ENCODE measurements at regions of chr4 and their contacts with region 1.

Region 1: GRCh38 chr4:128863312-128864075 is 54.0 kb downstream of the JADE1 start:
- DNase-seq: peak; percentile 86
- H3K4me3 ChIP-seq: no peak overlapping the region
- H3K27ac ChIP-seq: no peak overlapping the region
- H3K4me1 ChIP-seq: no peaks in the 10 kb centered on the region
- H3K27me3 ChIP-seq: no peaks in the 10 kb centered on the region
- CTCF ChIP-seq: peak; percentile 83

Region 2: DNA sequence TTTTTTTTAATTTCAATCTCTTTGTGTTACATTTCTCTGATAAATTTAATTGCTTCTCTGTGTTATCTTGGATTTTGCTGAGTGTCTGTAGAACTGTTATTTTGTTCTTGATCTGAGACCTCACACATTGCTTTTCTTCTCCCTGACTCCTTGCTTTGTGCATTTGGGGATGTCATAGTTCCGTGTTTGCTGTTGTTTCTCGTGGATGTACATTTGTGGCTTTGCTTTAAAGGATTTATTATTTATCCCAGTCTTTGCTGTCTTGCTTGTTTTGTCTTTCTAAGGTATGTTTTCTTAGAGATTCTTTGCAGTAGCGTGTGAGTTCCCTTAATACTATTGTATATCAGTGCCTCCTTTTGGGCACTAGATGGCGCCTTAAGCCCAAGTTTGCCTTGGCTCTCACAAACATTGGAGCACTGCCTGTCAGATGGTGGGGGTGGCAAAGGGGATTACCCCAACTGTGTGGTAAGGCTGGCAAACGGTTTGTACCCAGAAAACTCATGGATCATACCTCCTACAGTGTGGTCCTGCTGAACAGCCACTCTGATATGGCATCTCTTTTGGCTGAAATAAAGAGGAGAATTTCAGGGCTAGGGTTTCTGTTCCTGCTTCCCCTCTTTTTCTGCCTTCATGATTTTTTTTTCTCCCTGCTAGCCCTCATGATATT is 672.2 kb before region 1 on chr4:
- intact Hi-C with region 1: loop called (anchors 5 kb)
- DNase-seq: peak; percentile 65
- H3K4me3 ChIP-seq: no peak overlapping the region
- H3K27ac ChIP-seq: no peak overlapping the region
- H3K4me1 ChIP-seq: no peaks in the 10 kb centered on the region
- H3K27me3 ChIP-seq: no peaks in the 10 kb centered on the region
- CTCF ChIP-seq: peak; percentile 81

Region 3: GRCh38 chr4:128454281-128455075 is 409.0 kb before region 1 on chr4:
- intact Hi-C with region 1: loop called (anchors 5 kb)
- DNase-seq: peak; percentile 64
- H3K4me3 ChIP-seq: no peak overlapping the region
- H3K27ac ChIP-seq: no peak overlapping the region
- H3K4me1 ChIP-seq: no peaks in the 10 kb centered on the region
- H3K27me3 ChIP-seq: no peaks in the 10 kb centered on the region
- CTCF ChIP-seq: peak; percentile 57

Region 4: GRCh38 chr4:128565565-128566186 is 297.8 kb before region 1 on chr4:
- intact Hi-C with region 1: loop called (anchors 5 kb)
- DNase-seq: peak; percentile 52
- H3K4me3 ChIP-seq: no peak overlapping the region
- H3K27ac ChIP-seq: no peak overlapping the region
- H3K4me1 ChIP-seq: no peaks in the 10 kb centered on the region
- H3K27me3 ChIP-seq: no peaks in the 10 kb centered on the region
- CTCF ChIP-seq: peak; percentile 45

Region 5: DNA sequence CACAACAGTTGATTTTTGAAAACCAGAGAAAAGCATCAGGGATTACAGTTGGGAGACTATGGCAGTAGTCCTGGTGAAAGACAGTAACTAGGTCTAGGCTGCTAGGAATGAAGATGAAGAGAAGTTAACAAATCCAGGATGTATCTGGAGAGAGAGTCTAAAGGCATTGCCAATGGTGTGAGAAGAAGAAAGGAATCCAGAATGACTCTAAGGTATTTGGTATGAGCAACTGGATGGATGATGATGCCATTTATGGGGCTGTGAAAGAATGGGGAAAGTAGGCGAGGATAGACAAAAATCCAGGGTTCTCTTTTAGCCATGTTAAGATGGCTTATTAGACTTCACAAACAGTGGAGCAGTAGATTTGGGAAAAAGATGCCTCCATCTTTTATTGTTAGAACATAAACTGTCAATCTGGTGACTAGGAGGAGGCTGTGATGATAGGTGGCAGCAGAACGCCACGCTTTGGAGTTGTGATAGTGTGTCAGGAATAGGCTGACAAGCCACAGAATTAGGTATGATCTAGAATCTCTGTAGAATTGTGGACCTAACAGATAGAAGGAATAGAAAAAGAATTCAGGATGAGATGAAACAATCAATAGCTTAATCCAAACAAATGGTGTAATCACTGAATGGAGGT is 81.3 kb before region 1 on chr4:
- intact Hi-C with region 1: loop called (anchors 5 kb)
- DNase-seq: peak; percentile 32
- H3K4me3 ChIP-seq: no peak overlapping the region
- H3K27ac ChIP-seq: no peak overlapping the region
- H3K4me1 ChIP-seq: no peaks in the 10 kb centered on the region
- H3K27me3 ChIP-seq: no peaks in the 10 kb centered on the region
- CTCF ChIP-seq: peak; percentile 27

Region 6: GRCh38 chr4:128924951-128925350 is 61.5 kb after region 1 on chr4:
- intact Hi-C with region 1: no loop called
- DNase-seq: no peak
- H3K4me3 ChIP-seq: no peak overlapping the region
- H3K27ac ChIP-seq: no peak overlapping the region
- H3K4me1 ChIP-seq: no peaks in the 10 kb centered on the region
- H3K27me3 ChIP-seq: no peaks in the 10 kb centered on the region
- CTCF ChIP-seq: no peak

Measured in colonic mucosa (tissue), 4 donors.